ENCODE measurements at regions of chr14 and their contacts with region 1.

Region 1: GRCh38 chr14:71932220-71932981 is at the start of gene RGS6:
- DNase-seq: no peak
- ATAC-seq: peak; percentile 85
- H3K4me3 ChIP-seq: peak within 1 kb of the TSS; percentile 58
- H3K27ac ChIP-seq: peak within 1 kb of the TSS; percentile 48
- H3K4me1 ChIP-seq: no peaks in the 10 kb centered on the region
- H3K27me3 ChIP-seq: peaks cover 0 to 6% of the 10 kb centered on the region in 2 experiments; a peak in 1 of 4 replicates
- CTCF ChIP-seq: peak; percentile 40 to 60 (median 47); a peak in 5 of 6 replicates
- EP300 ChIP-seq: no peak
- POLR2A ChIP-seq: peak; percentile 45; the same call in 1 of the 2 replicates
- RAD21 ChIP-seq: peak; percentile 76
- polyA plus RNA-seq, gene RGS6: 3.9 to 4.7 TPM

Region 2: GRCh38 chr14:71855399-71856036 is 76.9 kb before region 1 on chr14:
- CTCF ChIA-PET with region 1: interaction called, 3 read pairs
- POLR2A ChIA-PET with region 1: no interaction called
- RAD21 ChIA-PET with region 1: interaction called, 6 read pairs
- SMC1A ChIA-PET with region 1: interaction called, 21 read pairs
- in situ Hi-C with region 1: no loop called
- intact Hi-C with region 1: loop called (anchors 5 kb)
- DNase-seq: peak; percentile 31
- ATAC-seq: peak; percentile 85
- H3K4me3 ChIP-seq: no peak overlapping the region
- H3K27ac ChIP-seq: peak overlapping the region; percentile 58; the same call in 1 of the 2 replicates
- H3K4me1 ChIP-seq: peaks cover 10% of the 10 kb centered on the region
- H3K27me3 ChIP-seq: no peaks in the 10 kb centered on the region
- CTCF ChIP-seq: peak; percentile 68 to 77 (median 71)
- EP300 ChIP-seq: no peak
- POLR2A ChIP-seq: no peak
- RAD21 ChIP-seq: peak; percentile 78

Region 3: GRCh38 chr14:71967704-71968103 is 35.3 kb after region 1 on chr14:
- CTCF ChIA-PET with region 1: interaction called, 14 read pairs
- POLR2A ChIA-PET with region 1: interaction called, 3 read pairs
- RAD21 ChIA-PET with region 1: interaction called, 9 read pairs
- SMC1A ChIA-PET with region 1: interaction called, 9 read pairs
- in situ Hi-C with region 1: no loop called
- intact Hi-C with region 1: loop called (anchors 2 kb)
- DNase-seq: no peak
- ATAC-seq: peak; percentile 79
- H3K4me3 ChIP-seq: 0 out of 2 replicates have a peak overlapping the region, but pooled peaks have one; percentile 17
- H3K27ac ChIP-seq: peak overlapping the region; percentile 75
- H3K4me1 ChIP-seq: peaks cover 13% of the 10 kb centered on the region
- H3K27me3 ChIP-seq: no peaks in the 10 kb centered on the region
- CTCF ChIP-seq: no peak
- EP300 ChIP-seq: peak; percentile 54 to 62; a peak in 1 of 4 replicates
- POLR2A ChIP-seq: no peak
- RAD21 ChIP-seq: no peak

Region 4: DNA sequence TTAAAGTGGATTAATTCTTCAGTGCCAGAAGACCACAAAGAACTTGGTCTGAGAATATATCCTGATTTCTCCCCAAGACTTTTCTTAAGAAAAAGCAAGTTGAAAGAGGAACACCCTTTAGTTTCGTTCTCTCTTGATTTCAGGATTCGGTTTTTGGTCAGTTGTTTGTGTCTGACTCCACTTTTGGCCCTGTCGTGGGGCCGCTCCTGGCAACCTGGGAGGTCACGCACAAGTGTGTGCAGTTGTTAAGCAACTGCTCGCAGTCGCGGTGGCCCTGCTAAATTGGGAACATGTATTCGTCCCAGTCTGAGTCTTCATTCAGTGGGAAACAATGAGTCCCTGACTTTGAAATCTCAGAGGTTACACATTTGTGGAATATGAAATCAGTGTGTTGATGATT is 68.5 kb after region 1 on chr14:
- CTCF ChIA-PET with region 1: interaction called, 7 read pairs
- POLR2A ChIA-PET with region 1: interaction called, 3 read pairs
- RAD21 ChIA-PET with region 1: interaction called, 11 read pairs
- SMC1A ChIA-PET with region 1: interaction called, 7 read pairs
- in situ Hi-C with region 1: no loop called
- intact Hi-C with region 1: loop called (anchors 5 kb)
- DNase-seq: peak; percentile 34
- ATAC-seq: peak; percentile 93
- H3K4me3 ChIP-seq: no peak overlapping the region
- H3K27ac ChIP-seq: peak overlapping the region; percentile 27; the same call in 1 of the 2 replicates
- H3K4me1 ChIP-seq: no peaks in the 10 kb centered on the region
- H3K27me3 ChIP-seq: no peaks in the 10 kb centered on the region
- CTCF ChIP-seq: no peak
- EP300 ChIP-seq: peak; percentile 65 to 74; a peak in 3 of 4 replicates
- POLR2A ChIP-seq: no peak
- RAD21 ChIP-seq: no peak

Region 5: DNA sequence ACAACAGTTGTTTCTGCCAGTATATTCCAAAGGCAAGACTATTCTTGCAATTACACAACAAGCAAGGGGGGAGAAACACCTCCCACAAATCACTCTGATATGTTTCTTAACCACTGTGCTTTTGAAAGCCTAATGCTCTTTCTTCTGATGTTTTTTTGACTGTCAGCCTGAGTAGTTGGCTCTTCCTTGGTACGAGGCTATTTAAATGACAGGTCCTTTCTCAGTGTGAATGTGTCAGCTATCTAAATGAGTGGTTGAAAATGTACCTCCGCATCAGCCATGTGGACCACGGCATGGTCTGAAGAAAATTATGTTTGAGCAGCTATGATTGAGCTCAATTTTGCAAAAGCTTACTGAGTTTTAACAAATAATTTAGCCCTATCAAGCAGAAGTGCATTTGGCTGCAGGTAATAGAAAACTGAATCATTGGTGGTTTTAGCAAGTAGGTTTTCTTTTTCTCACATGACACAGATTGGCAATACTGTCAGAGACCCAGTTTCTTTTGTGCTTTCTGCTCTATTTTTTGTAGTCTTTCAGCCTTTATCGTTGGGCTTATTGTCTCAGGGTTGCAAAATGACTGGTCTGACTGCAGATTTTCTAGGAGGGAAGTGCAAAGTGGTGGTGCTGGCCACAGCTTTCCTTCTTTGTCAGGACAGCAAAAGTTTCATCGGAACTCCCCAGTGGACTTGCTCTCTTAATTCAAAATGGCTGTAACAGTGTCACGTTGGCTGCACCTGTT is 162.6 kb after region 1 on chr14:
- CTCF ChIA-PET with region 1: interaction called, 7 read pairs
- POLR2A ChIA-PET with region 1: no interaction called
- RAD21 ChIA-PET with region 1: interaction called, 10 read pairs
- SMC1A ChIA-PET with region 1: interaction called, 11 read pairs
- in situ Hi-C with region 1: no loop called
- intact Hi-C with region 1: no loop called
- DNase-seq: peak; percentile 48
- ATAC-seq: peak; percentile 81
- H3K4me3 ChIP-seq: 0 out of 2 replicates have a peak overlapping the region, but pooled peaks have one; percentile 39
- H3K27ac ChIP-seq: peak overlapping the region; percentile 53
- H3K4me1 ChIP-seq: no peaks in the 10 kb centered on the region
- H3K27me3 ChIP-seq: no peaks in the 10 kb centered on the region
- CTCF ChIP-seq: no peak
- EP300 ChIP-seq: peak in 1 of 2 experiments; percentile 35; a peak in 2 of 4 replicates
- POLR2A ChIP-seq: no peak
- RAD21 ChIP-seq: peak; percentile 21; the same call in 1 of the 2 replicates

Region 6: DNA sequence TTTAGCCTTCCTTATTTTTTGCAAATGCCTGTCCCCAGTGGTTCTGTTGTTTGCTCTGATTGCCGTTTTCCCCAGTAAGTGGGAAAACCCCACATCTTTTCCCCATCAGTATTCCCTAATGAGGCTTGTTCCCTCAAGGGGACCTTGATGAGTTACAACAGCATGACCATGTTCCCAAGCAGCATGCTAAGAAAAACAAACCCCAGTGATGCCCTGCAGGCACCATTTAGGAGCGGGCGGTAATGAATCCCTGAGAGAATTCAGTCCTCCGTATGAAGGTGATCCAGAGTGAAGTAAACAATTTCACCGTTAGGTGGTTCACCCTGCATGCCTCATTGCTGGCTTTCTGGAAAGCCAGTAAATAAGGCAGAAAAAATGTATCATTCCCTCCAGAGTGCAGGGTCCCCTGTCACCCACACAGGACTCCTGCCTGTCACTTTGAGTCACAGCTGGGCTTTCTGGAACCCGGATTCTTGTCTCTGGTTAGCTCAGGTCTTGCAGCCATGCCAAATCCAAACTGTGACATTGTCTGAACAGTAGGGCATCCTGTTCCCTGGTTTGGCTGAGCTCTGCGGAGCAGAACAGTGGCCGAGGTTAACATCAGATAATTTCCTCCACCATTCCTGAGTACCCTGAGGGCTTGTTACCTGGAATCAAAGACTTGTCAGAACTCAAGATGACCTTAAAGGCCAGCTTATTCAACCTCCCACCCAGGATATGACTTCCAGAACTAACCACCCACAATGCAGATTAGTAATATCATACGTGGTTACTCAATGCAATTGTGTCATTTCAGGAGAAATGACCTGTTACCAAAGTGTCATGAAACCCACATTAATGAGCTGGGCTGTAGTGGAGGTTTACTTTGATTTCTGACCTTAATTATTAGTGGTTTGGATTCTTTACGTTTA is 222.6 kb after region 1 on chr14:
- CTCF ChIA-PET with region 1: no interaction called
- POLR2A ChIA-PET with region 1: no interaction called
- RAD21 ChIA-PET with region 1: interaction called, 3 read pairs
- SMC1A ChIA-PET with region 1: interaction called, 3 read pairs
- in situ Hi-C with region 1: no loop called
- intact Hi-C with region 1: loop called (anchors 10 kb)
- DNase-seq: peak; percentile 34
- ATAC-seq: peak; percentile 90
- H3K4me3 ChIP-seq: no peak overlapping the region
- H3K27ac ChIP-seq: no peak overlapping the region
- H3K4me1 ChIP-seq: no peaks in the 10 kb centered on the region
- H3K27me3 ChIP-seq: no peaks in the 10 kb centered on the region
- CTCF ChIP-seq: no peak
- EP300 ChIP-seq: peak; percentile 76 to 97
- POLR2A ChIP-seq: no peak
- RAD21 ChIP-seq: peak; percentile 14; the same call in 1 of the 2 replicates

Region 7: GRCh38 chr14:72420725-72421474 is 488.5 kb after region 1 on chr14:
- CTCF ChIA-PET with region 1: interaction called, 13 read pairs
- POLR2A ChIA-PET with region 1: no interaction called
- RAD21 ChIA-PET with region 1: interaction called, 7 read pairs
- SMC1A ChIA-PET with region 1: interaction called, 8 read pairs
- in situ Hi-C with region 1: no loop called
- intact Hi-C with region 1: loop called (anchors 2 kb)
- DNase-seq: peak; percentile 49
- ATAC-seq: peak; percentile 83
- H3K4me3 ChIP-seq: no peak overlapping the region
- H3K27ac ChIP-seq: no peak overlapping the region
- H3K4me1 ChIP-seq: no peaks in the 10 kb centered on the region
- H3K27me3 ChIP-seq: no peaks in the 10 kb centered on the region
- CTCF ChIP-seq: peak; percentile 91 to 97 (median 95)
- EP300 ChIP-seq: no peak
- POLR2A ChIP-seq: no peak
- RAD21 ChIP-seq: peak; percentile 99